Dorsolateral prefrontal cortex (tissue), 120 donors: ENCODE measurements at regions of chr2 and their contacts with region 1.

Region 1: GRCh38 chr2:127695491-127696472 is 5.5 kb upstream of the SFT2D3 start:
- DNase-seq: peak in 8 of 10 donors; percentile 43 to 73 (median 62)
- H3K4me3 ChIP-seq: peak overlapping the region in 54 of 59 donors; percentile 14 to 62 (median 45)
- H3K27ac ChIP-seq: no peak overlapping the region
- H3K27me3 ChIP-seq: no peaks in the 10 kb centered on the region
- CTCF ChIP-seq: peak in 55 of 56 donors; percentile 28 to 88 (median 62)

Region 2: GRCh38 chr2:127591221-127591923 is 104.4 kb before region 1 on chr2:
- intact Hi-C with region 1: loop called in 1 of 2 experiments (anchors 5 kb)
- DNase-seq: peak in 6 of 10 donors; percentile 34 to 75 (median 56)
- H3K4me3 ChIP-seq: no peak overlapping the region
- H3K27ac ChIP-seq: no peak overlapping the region
- H3K27me3 ChIP-seq: no peaks in the 10 kb centered on the region
- CTCF ChIP-seq: peak; percentile 30 to 94 (median 84)

Region 3: DNA sequence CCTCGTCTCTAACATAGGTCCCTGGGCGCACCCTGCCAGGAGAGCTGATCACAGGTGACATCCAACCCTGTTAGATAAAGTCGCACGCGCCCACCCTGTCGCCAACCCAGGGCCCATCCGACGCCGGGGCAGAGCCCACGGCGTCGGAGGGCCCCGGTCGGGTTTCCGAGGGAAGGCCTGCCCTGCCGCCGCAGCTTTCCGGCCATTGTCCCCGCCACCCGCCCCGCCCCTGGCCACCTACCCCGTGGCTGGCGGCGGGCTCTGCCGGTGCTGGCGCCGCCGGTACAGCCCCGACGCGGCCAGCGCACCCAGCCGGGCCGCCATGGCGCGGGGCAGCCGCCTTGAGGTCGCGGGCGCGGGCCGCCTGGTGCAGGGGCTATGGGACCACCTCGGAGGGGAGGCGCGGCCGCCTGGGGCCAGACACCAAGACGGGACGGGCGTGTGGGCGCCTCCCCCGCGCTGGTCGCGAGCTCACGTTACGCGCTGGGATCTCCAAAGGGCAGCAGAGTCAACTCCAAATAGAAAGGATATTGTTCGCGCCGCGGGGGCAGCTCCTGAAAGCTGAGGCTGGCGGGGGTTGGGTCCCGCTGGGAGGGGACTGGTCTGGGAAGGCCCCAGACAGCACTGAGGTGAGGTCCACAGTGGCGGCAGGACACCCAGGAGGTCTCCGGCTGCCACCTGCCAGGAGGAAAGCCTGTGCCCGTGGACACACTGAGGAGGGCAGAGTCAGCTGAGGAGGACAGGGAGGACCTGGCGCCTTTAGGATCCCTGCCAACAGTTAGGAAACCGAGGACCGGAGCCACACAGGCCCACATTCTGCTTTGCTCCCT is 31.5 kb before region 1 on chr2:
- intact Hi-C with region 1: loop called in 1 of 2 experiments (anchors 5 kb)
- DNase-seq: peak in 3 of 10 donors; percentile 0 to 22 (median 2)
- H3K4me3 ChIP-seq: peak overlapping the region in 34 of 59 donors; percentile 2 to 51 (median 30)
- H3K27ac ChIP-seq: peak overlapping the region in 35 of 59 donors; percentile 1 to 66 (median 47)
- H3K27me3 ChIP-seq: peaks cover 0 to 25% (median 9%) of the 10 kb centered on the region in 45 donors
- CTCF ChIP-seq: no peak

Region 4: GRCh38 chr2:127735537-127736399 is 40.0 kb after region 1 on chr2:
- intact Hi-C with region 1: no loop called
- DNase-seq: no peak
- H3K4me3 ChIP-seq: no peak overlapping the region
- H3K27ac ChIP-seq: no peak overlapping the region
- H3K27me3 ChIP-seq: no peaks in the 10 kb centered on the region
- CTCF ChIP-seq: no peak

Region 5: DNA sequence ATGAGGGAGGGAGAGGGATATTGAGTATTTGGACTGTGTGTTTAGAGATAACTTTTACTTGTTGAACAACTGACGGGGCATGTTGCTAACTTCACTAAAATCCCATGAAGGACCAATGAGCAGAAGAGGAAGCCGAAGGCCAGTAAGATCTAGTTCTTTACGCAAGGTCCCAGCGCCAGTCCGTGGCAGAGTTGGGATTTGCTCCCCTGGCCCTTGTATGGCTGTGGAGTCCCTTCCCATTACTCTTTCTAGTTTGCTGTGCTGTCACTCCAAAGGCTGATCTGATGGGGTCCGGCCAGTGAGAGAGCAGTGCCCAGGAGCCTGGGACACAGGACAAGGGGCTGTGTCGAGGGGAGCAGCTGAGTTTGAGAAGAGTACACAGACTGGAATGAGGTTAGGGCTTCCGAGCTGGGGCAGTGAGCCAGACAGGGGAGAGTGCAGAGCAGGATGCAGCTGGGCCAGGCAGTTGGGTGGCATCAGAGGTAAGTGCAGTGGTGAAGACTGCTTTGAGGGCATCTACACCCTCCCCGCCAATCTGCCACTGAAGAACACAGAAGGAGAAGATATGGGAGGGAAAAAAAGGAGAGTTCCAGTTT is 1315.8 kb after region 1 on chr2:
- intact Hi-C with region 1: no loop called
- DNase-seq: no peak
- H3K4me3 ChIP-seq: no peak overlapping the region
- H3K27ac ChIP-seq: no peak overlapping the region
- H3K27me3 ChIP-seq: no peaks in the 10 kb centered on the region
- CTCF ChIP-seq: no peak